ENCODE measurements at regions of chr20 and their contacts with region 1.

Region 1: GRCh38 chr20:1911536-1911935 is 16.3 kb downstream of the SIRPA start:
- DNase-seq: no peak
- H3K4me3 ChIP-seq: no peak overlapping the region
- CTCF ChIP-seq: no peak

Region 2: DNA sequence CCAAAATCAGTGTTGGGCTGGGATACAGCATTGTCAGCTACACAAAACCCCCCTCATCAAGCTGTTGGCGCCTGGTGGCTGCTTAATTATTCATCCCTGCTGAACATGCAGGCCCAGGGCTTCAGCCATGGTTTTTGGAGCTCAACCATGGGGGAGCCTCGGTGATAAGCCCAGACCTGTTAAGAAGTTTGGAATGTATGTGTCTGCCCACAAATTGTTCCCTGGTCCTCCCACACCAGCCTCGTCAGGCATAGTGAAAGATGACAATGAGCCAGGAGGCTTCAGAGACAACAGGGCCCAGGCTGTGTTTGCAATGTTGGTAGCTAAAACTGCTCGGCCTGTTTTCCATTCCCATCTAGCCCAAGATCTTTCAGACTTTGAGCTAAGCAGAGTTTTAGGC is 51.1 kb before region 1 on chr20:
- CTCF ChIA-PET with region 1: no interaction called
- POLR2A ChIA-PET with region 1: no interaction called
- DNase-seq: peak; percentile 54
- H3K4me3 ChIP-seq: no peak overlapping the region
- CTCF ChIP-seq: no peak

Region 3: GRCh38 chr20:1900321-1900801 is 11.2 kb before region 1 on chr20:
- CTCF ChIA-PET with region 1: interaction called, 11 read pairs
- POLR2A ChIA-PET with region 1: no interaction called
- DNase-seq: no peak
- H3K4me3 ChIP-seq: no peak overlapping the region
- CTCF ChIP-seq: peak; percentile 82

Region 4: GRCh38 chr20:2631228-2631627 is 719.7 kb after region 1 on chr20:
- CTCF ChIA-PET with region 1: no interaction called
- POLR2A ChIA-PET with region 1: no interaction called
- DNase-seq: no peak
- H3K4me3 ChIP-seq: no peak overlapping the region
- CTCF ChIP-seq: no peak

Measured in AG04449 (cell line).